ENCODE measurements at regions of chr5 and their contacts with region 1.

Region 1: GRCh38 chr5:115841382-115842088 is at the starts of genes AP3S1 and ATG12:
- DNase-seq: peak; percentile 92
- ATAC-seq: peak; percentile 96 to 98 (median 96)
- H3K4me3 ChIP-seq: peak within 1 kb of the TSS; percentile 59 to 96 (median 90)
- H3K27ac ChIP-seq: peak within 1 kb of the TSS; percentile 83 to 98 (median 95)
- H3K4me1 ChIP-seq: peaks cover 4 to 70% (median 56%) of the 10 kb centered on the region in 9 donors
- H3K27me3 ChIP-seq: no peaks in the 10 kb centered on the region
- CTCF ChIP-seq: no peak
- total RNA-seq, gene AP3S1: 31.9 to 63.0 (median 42.2) TPM
- total RNA-seq, gene ATG12: 18.0 to 29.8 (median 24.3) TPM

Region 2: DNA sequence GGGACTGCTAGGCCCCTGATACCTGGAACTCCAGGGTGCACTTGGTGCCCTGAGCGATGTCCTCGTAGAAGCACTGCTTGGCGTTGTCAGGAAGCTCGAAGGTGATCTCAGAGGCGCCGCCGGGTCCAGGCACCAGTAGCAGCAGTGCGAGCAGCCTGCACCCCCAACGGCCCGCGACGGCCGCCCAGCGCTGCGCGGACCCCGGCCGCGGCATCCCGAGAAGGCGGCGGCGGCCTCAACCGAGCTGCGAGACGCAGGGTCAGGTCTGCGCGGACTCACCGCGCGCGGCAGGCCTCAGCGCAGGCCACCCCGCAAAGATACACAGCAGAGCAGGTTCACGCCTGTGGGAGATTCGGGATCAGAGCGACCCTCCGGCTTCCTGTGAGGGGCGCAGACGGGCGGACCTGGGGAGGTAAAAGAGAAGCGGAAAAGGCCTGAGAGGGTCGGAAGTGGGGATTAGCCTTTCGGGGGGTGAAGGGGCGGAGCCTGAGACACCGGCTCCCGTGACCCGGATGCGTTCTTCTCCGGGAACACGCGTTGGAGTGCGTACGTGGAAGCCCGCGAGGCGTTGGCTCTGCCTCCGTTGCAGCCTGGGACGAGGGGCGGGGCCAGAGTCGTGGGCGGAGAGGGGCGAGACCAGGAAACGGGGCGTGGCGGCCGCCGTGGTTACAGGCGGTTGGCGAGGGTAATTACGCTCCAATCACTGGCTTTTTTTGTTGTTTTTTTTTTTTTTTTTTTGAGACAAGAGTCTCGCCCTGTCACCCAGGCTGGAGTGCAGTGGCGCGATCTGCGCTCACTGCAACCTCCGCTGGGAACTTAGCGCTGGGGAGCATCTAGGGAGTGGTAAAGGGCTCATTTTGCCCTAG is 215.7 kb before region 1 on chr5 and contains the start of gene TMED7:
- intact Hi-C with region 1: loop called in 4 of 10 experiments (anchors 1 to 5 kb)
- DNase-seq: peak; percentile 100
- ATAC-seq: peak; percentile 99
- H3K4me3 ChIP-seq: peak within 1 kb of the TSS; percentile 48 to 100 (median 90)
- H3K27ac ChIP-seq: peak within 1 kb of the TSS; percentile 31 to 99 (median 96)
- H3K4me1 ChIP-seq: peaks cover 0 to 51% (median 44%) of the 10 kb centered on the region in 9 donors
- H3K27me3 ChIP-seq: no peaks in the 10 kb centered on the region
- CTCF ChIP-seq: peak in 1 of 9 donors; percentile 18
- total RNA-seq, gene TMED7: 73.4 to 100 (median 85.9) TPM

Region 3: GRCh38 chr5:115634343-115635132 is 207.0 kb before region 1 on chr5:
- intact Hi-C with region 1: loop called in 6 of 10 experiments (anchors 2 to 5 kb)
- DNase-seq: peak; percentile 86 to 88
- ATAC-seq: peak; percentile 80 to 99 (median 97)
- H3K4me3 ChIP-seq: peak overlapping the region in 8 of 10 donors; percentile 18 to 56 (median 41)
- H3K27ac ChIP-seq: peak overlapping the region; percentile 20 to 74 (median 55)
- H3K4me1 ChIP-seq: peaks cover 0 to 10% (median 6%) of the 10 kb centered on the region in 9 donors
- H3K27me3 ChIP-seq: no peaks in the 10 kb centered on the region
- CTCF ChIP-seq: peak; percentile 71 to 94 (median 91)

Region 4: DNA sequence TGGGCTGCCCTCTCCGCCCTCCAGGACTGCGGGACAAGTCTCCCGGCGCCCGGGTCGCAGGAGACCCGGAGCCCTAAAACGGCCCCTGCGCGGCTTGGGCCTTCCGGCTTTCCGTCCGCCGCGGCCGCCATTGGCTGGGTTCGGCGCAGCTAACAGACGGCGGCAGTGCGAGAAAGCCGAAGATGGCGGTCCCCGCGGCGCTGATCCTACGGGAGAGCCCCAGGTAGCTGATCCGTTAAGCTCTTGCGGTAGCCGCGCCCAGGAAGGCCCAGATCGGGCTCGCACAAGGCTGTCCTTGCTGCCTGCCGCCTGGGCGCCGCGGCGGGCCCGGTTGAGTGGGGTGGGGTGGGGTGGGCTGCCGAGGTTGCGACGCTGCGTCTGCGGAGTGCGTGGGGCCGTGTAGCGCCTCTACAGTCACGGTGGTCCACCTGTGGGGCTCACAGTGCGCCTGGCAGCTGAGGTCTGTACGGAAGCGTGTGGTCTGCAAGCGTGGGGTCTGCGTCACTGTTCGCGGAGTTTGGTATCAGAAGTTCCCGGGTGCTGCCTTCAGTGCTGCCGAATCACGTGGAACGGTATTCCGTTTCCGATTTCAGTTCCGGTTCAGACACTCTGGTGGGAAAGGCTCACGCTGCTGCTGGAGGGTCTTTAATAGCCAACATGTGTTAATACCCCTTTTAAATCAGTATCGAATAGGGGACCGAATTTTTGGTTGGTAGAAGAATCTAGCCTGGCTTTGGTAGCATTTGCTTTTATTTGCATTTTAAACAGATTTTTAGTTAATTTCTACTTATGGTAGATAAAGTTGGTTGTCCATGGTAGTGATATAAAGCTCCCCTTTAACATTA is 243.6 kb after region 1 on chr5 and contains the start of gene COMMD10:
- intact Hi-C with region 1: loop called in 1 of 10 experiments (anchors 5 kb)
- DNase-seq: peak; percentile 78 to 80
- ATAC-seq: peak; percentile 91 to 95 (median 93)
- H3K4me3 ChIP-seq: peak within 1 kb of the TSS; percentile 70 to 95 (median 86)
- H3K27ac ChIP-seq: peak within 1 kb of the TSS; percentile 73 to 97 (median 92)
- H3K4me1 ChIP-seq: peaks cover 0 to 60% (median 34%) of the 10 kb centered on the region in 9 donors
- H3K27me3 ChIP-seq: no peaks in the 10 kb centered on the region
- CTCF ChIP-seq: no peak
- total RNA-seq, gene COMMD10: 27.9 to 42.8 (median 36.1) TPM